B cell (primary cell): ENCODE measurements at regions of chr14 and their contacts with region 1.

Region 1: GRCh38 chr14:91060351-91061055 is at the start of gene RPS6KA5:
- DNase-seq: peak; percentile 100
- ATAC-seq: peak; percentile 80
- H3K4me3 ChIP-seq: peak within 1 kb of the TSS; percentile 80 to 97 (median 87)
- H3K4me3 Mint-ChIP-seq: peak within 1 kb of the TSS; percentile 86
- H3K27ac ChIP-seq: peak within 1 kb of the TSS; percentile 97 to 98
- H3K27ac Mint-ChIP-seq: peak within 1 kb of the TSS; percentile 83
- H3K4me1 ChIP-seq: peaks cover 26 to 35% of the 10 kb centered on the region in 2 donors
- H3K4me1 Mint-ChIP-seq: peaks cover 46% of the 10 kb centered on the region
- H3K27me3 ChIP-seq: no peaks in the 10 kb centered on the region
- H3K27me3 Mint-ChIP-seq: no peaks in the 10 kb centered on the region
- CTCF ChIP-seq: peak; percentile 12
- total RNA-seq, gene RPS6KA5: 33.8 and 34.6 TPM in 2 replicates

Region 2: GRCh38 chr14:90545966-90546751 is 514.3 kb before region 1 on chr14:
- CTCF ChIA-PET with region 1: no interaction called
- POLR2A ChIA-PET with region 1: no interaction called
- intact Hi-C with region 1: no loop called
- DNase-seq: no peak
- ATAC-seq: no peak
- H3K4me3 ChIP-seq: no peak overlapping the region
- H3K4me3 Mint-ChIP-seq: no peak overlapping the region
- H3K27ac ChIP-seq: no peak overlapping the region
- H3K27ac Mint-ChIP-seq: no peak overlapping the region
- H3K4me1 ChIP-seq: no peaks in the 10 kb centered on the region
- H3K4me1 Mint-ChIP-seq: no peaks in the 10 kb centered on the region
- H3K27me3 ChIP-seq: no peaks in the 10 kb centered on the region
- H3K27me3 Mint-ChIP-seq: no peaks in the 10 kb centered on the region
- CTCF ChIP-seq: no peak

Region 3: DNA sequence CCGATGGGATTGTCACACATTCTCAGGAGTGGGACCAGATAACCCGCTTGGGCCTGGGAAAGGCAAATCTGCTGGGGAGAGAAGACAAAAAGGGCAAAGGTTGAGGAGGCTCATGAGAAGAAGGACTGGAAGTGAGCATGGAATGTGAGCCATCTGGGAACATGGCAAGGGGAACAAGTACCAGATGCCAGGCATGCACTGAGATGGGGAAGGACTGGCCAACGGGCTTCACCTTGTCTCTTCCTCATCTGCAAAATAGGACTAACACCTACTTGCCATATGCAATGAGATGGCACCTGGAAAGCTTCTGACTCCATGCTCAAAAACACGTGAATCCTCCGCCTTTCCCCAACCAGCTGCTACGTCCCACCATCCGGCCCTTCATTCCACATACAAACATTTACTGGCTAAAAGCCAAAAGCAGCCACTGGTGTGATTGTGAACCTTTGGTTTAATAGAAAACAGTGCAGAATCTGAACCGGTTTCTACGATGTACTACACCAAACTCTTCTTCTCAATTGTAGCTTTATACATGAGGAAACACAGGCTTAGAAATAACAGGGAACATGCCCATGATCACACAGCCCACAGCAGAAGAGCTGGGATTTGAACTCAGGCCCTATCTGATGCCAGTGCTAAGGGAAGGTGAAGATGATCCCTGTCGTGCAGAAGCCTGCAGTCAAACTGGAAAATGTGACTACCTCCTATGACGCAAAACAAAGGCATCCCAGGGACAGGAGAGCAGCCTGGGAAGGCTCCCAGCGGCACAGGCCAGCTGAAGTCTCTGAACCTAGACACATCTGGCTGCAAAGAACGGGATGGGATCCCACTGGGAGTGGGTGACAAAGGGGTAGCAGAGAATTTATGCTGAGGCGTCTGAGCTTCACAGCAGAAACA is 356.4 kb before region 1 on chr14:
- CTCF ChIA-PET with region 1: no interaction called
- POLR2A ChIA-PET with region 1: no interaction called
- intact Hi-C with region 1: no loop called
- DNase-seq: no peak
- ATAC-seq: no peak
- H3K4me3 ChIP-seq: no peak overlapping the region
- H3K4me3 Mint-ChIP-seq: no peak overlapping the region
- H3K27ac ChIP-seq: no peak overlapping the region
- H3K27ac Mint-ChIP-seq: no peak overlapping the region
- H3K4me1 ChIP-seq: no peaks in the 10 kb centered on the region
- H3K4me1 Mint-ChIP-seq: no peaks in the 10 kb centered on the region
- H3K27me3 ChIP-seq: peaks cover 0 to 2% (median 0%) of the 10 kb centered on the region in 4 experiments
- H3K27me3 Mint-ChIP-seq: peaks cover 12% of the 10 kb centered on the region
- CTCF ChIP-seq: no peak

Region 4: DNA sequence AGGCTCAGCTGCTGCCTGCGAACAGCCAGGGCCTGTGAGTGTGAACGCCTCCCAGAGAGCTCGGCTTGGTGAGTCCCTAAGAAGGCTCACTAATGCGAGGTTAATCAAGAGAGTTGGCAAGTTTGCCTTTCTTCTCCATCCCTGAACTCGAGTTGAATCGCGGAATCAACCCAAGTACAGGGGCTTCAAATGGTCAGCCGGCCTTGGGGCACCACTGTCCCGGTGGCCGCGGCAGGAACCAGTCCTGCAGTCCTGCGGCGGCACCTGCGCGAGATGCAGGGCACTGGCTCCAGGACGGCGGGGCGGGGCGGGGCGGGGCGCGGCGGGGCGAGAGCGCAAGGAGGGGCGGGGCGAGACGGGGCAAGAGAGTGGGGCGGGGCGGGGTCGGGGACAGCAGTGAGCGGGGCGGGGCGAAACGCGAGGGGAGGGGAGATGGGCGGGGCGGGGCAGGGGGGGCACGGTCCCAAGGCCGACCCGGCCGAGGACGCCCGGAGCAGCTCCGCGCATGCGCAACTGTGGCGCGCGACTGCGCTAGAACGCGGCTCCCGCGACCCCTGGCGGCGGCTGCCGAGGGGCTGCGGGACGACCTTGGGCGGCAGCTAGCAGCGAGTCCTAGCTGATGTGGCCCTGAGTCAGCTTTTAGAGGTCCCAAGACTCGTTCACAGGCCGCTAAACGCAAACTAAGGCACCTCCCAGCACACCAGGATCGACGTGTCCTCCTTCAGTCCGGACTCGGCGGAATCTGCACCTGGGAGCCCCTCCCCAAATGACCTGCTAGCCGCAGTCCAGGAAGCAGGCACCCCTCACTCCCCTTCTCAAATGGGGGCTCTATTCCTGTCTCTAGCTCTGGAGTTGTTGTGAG is 302.2 kb before region 1 on chr14:
- CTCF ChIA-PET with region 1: no interaction called
- POLR2A ChIA-PET with region 1: no interaction called
- intact Hi-C with region 1: loop called (anchors 10 kb)
- DNase-seq: peak; percentile 96
- ATAC-seq: peak; percentile 85
- H3K4me3 ChIP-seq: peak overlapping the region; percentile 59 to 77 (median 66)
- H3K4me3 Mint-ChIP-seq: peak overlapping the region; percentile 82
- H3K27ac ChIP-seq: peak overlapping the region; percentile 71 to 79
- H3K27ac Mint-ChIP-seq: peak overlapping the region; percentile 66
- H3K4me1 ChIP-seq: peaks cover 22 to 29% of the 10 kb centered on the region in 2 donors
- H3K4me1 Mint-ChIP-seq: peaks cover 20% of the 10 kb centered on the region
- H3K27me3 ChIP-seq: no peaks in the 10 kb centered on the region
- H3K27me3 Mint-ChIP-seq: peaks cover 3% of the 10 kb centered on the region
- CTCF ChIP-seq: peak; percentile 78

Region 5: DNA sequence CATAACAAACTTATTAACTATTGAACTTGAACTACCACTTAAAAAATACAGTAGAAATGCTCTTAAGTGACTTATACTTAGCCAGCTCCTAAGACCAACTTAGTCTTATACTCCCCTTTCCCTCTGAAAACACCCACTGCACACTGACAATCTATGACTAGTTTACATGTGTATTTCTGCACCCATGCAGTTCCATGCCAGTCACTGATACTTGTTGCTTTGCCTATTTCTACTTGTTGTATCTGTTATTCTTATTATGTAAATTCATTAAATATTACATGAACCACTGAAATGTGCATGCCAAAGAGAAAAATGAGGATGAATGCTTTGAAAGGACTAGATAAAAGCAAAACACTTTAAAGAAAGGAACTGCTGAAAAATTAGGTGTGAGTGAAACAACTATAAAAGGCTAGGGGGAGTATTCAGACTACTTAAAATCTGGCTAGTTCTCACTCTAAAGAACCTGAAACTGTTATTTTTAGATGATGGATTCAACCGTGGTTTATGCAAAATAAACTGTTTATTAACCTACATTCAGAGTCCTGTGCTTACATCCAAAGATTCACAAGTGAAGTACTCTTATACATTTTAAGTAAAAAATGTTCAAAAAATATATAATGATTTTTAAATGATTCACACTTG is 74.8 kb before region 1 on chr14:
- CTCF ChIA-PET with region 1: interaction called, 24 read pairs
- POLR2A ChIA-PET with region 1: no interaction called
- intact Hi-C with region 1: no loop called
- DNase-seq: peak; percentile 45
- ATAC-seq: peak; percentile 31
- H3K4me3 ChIP-seq: no peak overlapping the region
- H3K4me3 Mint-ChIP-seq: no peak overlapping the region
- H3K27ac ChIP-seq: no peak overlapping the region
- H3K27ac Mint-ChIP-seq: no peak overlapping the region
- H3K4me1 ChIP-seq: peaks cover 13% of the 10 kb centered on the region in 2 donors
- H3K4me1 Mint-ChIP-seq: peaks cover 17% of the 10 kb centered on the region
- H3K27me3 ChIP-seq: no peaks in the 10 kb centered on the region
- H3K27me3 Mint-ChIP-seq: no peaks in the 10 kb centered on the region
- CTCF ChIP-seq: peak; percentile 4

Region 6: GRCh38 chr14:91114079-91115065 is 53.9 kb after region 1 on chr14:
- CTCF ChIA-PET with region 1: interaction called, 9 read pairs
- POLR2A ChIA-PET with region 1: interaction called, 9 read pairs
- intact Hi-C with region 1: loop called (anchors 1 kb)
- DNase-seq: peak; percentile 85
- ATAC-seq: peak; percentile 80
- H3K4me3 ChIP-seq: peak overlapping the region; percentile 71 to 94 (median 82)
- H3K4me3 Mint-ChIP-seq: peak overlapping the region; percentile 93
- H3K27ac ChIP-seq: peak overlapping the region; percentile 89 to 95
- H3K27ac Mint-ChIP-seq: peak overlapping the region; percentile 98
- H3K4me1 ChIP-seq: peaks cover 35 to 50% of the 10 kb centered on the region in 2 donors
- H3K4me1 Mint-ChIP-seq: peaks cover 68% of the 10 kb centered on the region
- H3K27me3 ChIP-seq: no peaks in the 10 kb centered on the region
- H3K27me3 Mint-ChIP-seq: no peaks in the 10 kb centered on the region
- CTCF ChIP-seq: no peak

Region 7: DNA sequence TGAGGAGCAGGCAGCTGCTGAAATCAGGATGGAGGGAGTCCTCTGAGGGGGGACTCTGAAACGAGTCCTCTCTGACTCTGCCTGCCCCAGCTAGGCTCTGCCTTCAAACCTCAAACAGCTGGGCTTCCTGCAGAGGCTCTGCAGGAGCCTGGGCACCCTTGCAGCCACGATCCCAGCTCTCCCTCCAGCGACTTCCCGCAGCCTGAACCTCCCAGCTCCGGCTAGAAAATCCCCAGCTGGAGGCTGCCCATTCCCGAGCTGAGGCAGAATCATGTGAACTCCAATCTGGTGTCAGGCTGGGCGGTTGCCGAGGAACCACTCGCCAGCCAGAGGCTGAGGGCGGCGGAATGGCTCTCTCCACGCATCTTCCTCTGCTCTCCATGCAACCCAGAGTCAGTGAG is 184.0 kb after region 1 on chr14 and contains the start of gene GPR68:
- CTCF ChIA-PET with region 1: no interaction called
- POLR2A ChIA-PET with region 1: interaction called, 4 read pairs
- intact Hi-C with region 1: loop called (anchors 5 kb)
- DNase-seq: no peak
- ATAC-seq: no peak
- H3K4me3 ChIP-seq: peak within 1 kb of the TSS in 2 of 5 experiments; percentile 30 to 37
- H3K4me3 Mint-ChIP-seq: peak within 1 kb of the TSS; percentile 75
- H3K27ac ChIP-seq: peak within 1 kb of the TSS; percentile 57 to 79
- H3K27ac Mint-ChIP-seq: peak within 1 kb of the TSS; percentile 91
- H3K4me1 ChIP-seq: peaks cover 46 to 55% of the 10 kb centered on the region in 2 donors
- H3K4me1 Mint-ChIP-seq: peaks cover 62% of the 10 kb centered on the region
- H3K27me3 ChIP-seq: no peaks in the 10 kb centered on the region
- H3K27me3 Mint-ChIP-seq: no peaks in the 10 kb centered on the region
- CTCF ChIP-seq: no peak
- total RNA-seq, gene GPR68: 0.34 and 0.53 TPM in 2 replicates

Region 8: GRCh38 chr14:91410771-91411536 is 350.5 kb after region 1 on chr14:
- CTCF ChIA-PET with region 1: no interaction called
- POLR2A ChIA-PET with region 1: no interaction called
- intact Hi-C with region 1: no loop called
- DNase-seq: peak; percentile 47
- ATAC-seq: peak; percentile 8
- H3K4me3 ChIP-seq: peak overlapping the region in 3 of 5 experiments; percentile 12 to 41 (median 13)
- H3K4me3 Mint-ChIP-seq: peak overlapping the region; percentile 84
- H3K27ac ChIP-seq: peak overlapping the region in 1 of 2 donors; percentile 75
- H3K27ac Mint-ChIP-seq: peak overlapping the region; percentile 93
- H3K4me1 ChIP-seq: peaks cover 78 to 95% of the 10 kb centered on the region in 2 donors
- H3K4me1 Mint-ChIP-seq: peaks cover 80% of the 10 kb centered on the region
- H3K27me3 ChIP-seq: no peaks in the 10 kb centered on the region
- H3K27me3 Mint-ChIP-seq: no peaks in the 10 kb centered on the region
- CTCF ChIP-seq: no peak

Region 9: GRCh38 chr14:91510174-91511042 is 449.9 kb after region 1 on chr14 and contains the start of gene PPP4R3A:
- CTCF ChIA-PET with region 1: no interaction called
- POLR2A ChIA-PET with region 1: no interaction called
- intact Hi-C with region 1: loop called (anchors 1 kb)
- DNase-seq: peak; percentile 97
- ATAC-seq: peak; percentile 87
- H3K4me3 ChIP-seq: peak within 1 kb of the TSS; percentile 72 to 99 (median 84)
- H3K4me3 Mint-ChIP-seq: peak within 1 kb of the TSS; percentile 99
- H3K27ac ChIP-seq: peak within 1 kb of the TSS; percentile 97 to 100
- H3K27ac Mint-ChIP-seq: peak within 1 kb of the TSS; percentile 100
- H3K4me1 ChIP-seq: peaks cover 32% of the 10 kb centered on the region in 2 donors
- H3K4me1 Mint-ChIP-seq: peaks cover 37% of the 10 kb centered on the region
- H3K27me3 ChIP-seq: no peaks in the 10 kb centered on the region
- H3K27me3 Mint-ChIP-seq: no peaks in the 10 kb centered on the region
- CTCF ChIP-seq: no peak
- total RNA-seq, gene PPP4R3A: 184 and 189 TPM in 2 replicates